K562 (cell line): ENCODE measurements at regions of chr3 and their contacts with region 1.

Region 1: GRCh38 chr3:115092220-115092791 is 54.8 kb downstream of the ZBTB20 start:
- DNase-seq: peak in 3 of 4 experiments; percentile 2 to 47 (median 17)
- ATAC-seq: peak; percentile 91
- H3K4me3 ChIP-seq: no peak overlapping the region
- H3K27ac ChIP-seq: no peak overlapping the region
- H3K4me1 ChIP-seq: no peaks in the 10 kb centered on the region
- H3K27me3 ChIP-seq: no peaks in the 10 kb centered on the region
- CTCF ChIP-seq: peak; percentile 32 to 67 (median 49); a peak in 4 of 6 replicates
- EP300 ChIP-seq: no peak
- POLR2A ChIP-seq: no peak
- RAD21 ChIP-seq: peak; percentile 53 to 63

Region 2: DNA sequence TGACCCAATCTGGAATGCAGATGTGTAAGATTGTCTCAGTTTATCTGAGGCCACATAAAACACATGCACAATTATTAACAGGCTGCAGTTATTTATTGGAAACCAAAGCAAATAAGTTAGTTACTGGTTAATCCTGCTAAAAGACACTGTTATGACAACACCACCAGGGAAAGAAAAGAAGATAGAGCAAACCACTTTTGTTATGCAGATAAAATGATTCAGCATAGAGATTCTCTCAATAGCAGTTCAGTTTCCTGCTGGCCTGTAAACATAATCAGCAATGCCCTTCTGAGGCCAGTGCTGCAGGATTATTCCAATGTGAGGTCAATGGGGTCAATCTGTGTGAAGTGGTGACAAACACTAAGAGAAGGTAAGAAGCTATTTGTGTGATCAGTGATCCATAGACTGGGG is 189.6 kb before region 1 on chr3:
- CTCF ChIA-PET with region 1: no interaction called
- POLR2A ChIA-PET with region 1: no interaction called
- in situ Hi-C with region 1: no loop called
- intact Hi-C with region 1: no loop called
- DNase-seq: no peak
- ATAC-seq: no peak
- H3K4me3 ChIP-seq: no peak overlapping the region
- H3K27ac ChIP-seq: no peak overlapping the region
- H3K4me1 ChIP-seq: no peaks in the 10 kb centered on the region; a peak in 1 of 5 replicates
- H3K27me3 ChIP-seq: no peaks in the 10 kb centered on the region
- CTCF ChIP-seq: no peak
- EP300 ChIP-seq: no peak
- POLR2A ChIP-seq: no peak
- RAD21 ChIP-seq: no peak

Region 3: GRCh38 chr3:115169808-115170207 is 77.5 kb after region 1 on chr3:
- CTCF ChIA-PET with region 1: interaction called, 8 read pairs
- POLR2A ChIA-PET with region 1: no interaction called
- in situ Hi-C with region 1: no loop called
- intact Hi-C with region 1: loop called (anchors 2 kb)
- DNase-seq: no peak
- ATAC-seq: no peak
- H3K4me3 ChIP-seq: no peak overlapping the region
- H3K27ac ChIP-seq: no peak overlapping the region
- H3K4me1 ChIP-seq: no peaks in the 10 kb centered on the region; a peak in 1 of 5 replicates
- H3K27me3 ChIP-seq: no peaks in the 10 kb centered on the region
- CTCF ChIP-seq: peak in 1 of 3 experiments; percentile 29; a peak in 1 of 6 replicates
- EP300 ChIP-seq: no peak
- POLR2A ChIP-seq: no peak
- RAD21 ChIP-seq: peak; percentile 21 to 45; a peak in 3 of 4 replicates

Region 4: DNA sequence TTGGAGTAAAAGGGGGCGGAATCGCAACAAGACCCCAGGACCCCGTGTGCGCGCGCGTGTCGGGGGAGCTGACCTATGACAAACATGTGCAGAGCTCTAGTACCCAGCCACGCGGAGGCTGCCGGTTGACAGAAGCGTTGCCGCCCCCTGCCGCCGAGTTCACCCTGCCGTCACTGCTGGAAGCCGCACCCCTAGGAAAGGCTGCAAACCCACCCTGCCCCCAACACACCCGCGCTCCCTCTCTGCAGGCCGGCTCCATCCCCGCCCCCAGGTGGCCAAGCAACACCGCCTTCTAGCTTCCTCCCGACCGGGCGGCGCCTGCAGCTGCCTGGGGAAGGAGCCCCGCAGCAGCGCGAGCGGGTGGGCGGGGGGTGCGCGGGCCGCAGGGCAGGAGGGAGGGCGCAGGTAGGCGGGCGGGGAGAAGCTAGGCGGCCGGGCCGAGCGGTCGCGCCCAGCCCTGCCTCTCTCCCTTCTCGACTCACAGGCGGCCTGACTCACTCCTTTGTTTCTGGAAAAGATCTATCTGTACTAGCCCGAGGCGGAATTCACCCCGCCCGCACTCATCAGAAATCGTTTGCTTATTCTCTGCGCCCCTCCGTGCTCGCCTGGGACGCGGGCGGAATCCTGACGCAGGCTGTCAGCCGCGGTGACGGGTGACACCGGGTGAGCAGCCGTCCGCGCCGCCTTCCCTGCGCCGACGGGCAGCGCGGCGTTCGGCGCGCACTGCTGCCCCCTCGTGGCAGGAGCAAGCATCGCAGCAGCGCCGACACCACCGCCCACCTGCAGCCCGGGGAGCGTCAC is 691.8 kb after region 1 on chr3:
- CTCF ChIA-PET with region 1: interaction called, 6 read pairs
- POLR2A ChIA-PET with region 1: interaction called, 5 read pairs
- in situ Hi-C with region 1: no loop called
- intact Hi-C with region 1: loop called (anchors 10 kb)
- DNase-seq: peak; percentile 79 to 89 (median 82)
- ATAC-seq: peak; percentile 97
- H3K4me3 ChIP-seq: peak overlapping the region; percentile 52
- H3K27ac ChIP-seq: peak overlapping the region; percentile 72; the same call in 2 of the 3 replicates
- H3K4me1 ChIP-seq: peaks cover 3 to 8% of the 10 kb centered on the region in 2 experiments; a peak in 2 of 5 replicates
- H3K27me3 ChIP-seq: no peaks in the 10 kb centered on the region
- CTCF ChIP-seq: peak; percentile 81 to 90 (median 83)
- EP300 ChIP-seq: no peak
- POLR2A ChIP-seq: no peak
- RAD21 ChIP-seq: peak; percentile 65